ENCODE measurements at regions of chr2 and their contacts with region 1.

Region 1: GRCh38 chr2:42974721-42975717 is 182.6 kb upstream of the HAAO start:
- DNase-seq: peak; percentile 90

Region 2: DNA sequence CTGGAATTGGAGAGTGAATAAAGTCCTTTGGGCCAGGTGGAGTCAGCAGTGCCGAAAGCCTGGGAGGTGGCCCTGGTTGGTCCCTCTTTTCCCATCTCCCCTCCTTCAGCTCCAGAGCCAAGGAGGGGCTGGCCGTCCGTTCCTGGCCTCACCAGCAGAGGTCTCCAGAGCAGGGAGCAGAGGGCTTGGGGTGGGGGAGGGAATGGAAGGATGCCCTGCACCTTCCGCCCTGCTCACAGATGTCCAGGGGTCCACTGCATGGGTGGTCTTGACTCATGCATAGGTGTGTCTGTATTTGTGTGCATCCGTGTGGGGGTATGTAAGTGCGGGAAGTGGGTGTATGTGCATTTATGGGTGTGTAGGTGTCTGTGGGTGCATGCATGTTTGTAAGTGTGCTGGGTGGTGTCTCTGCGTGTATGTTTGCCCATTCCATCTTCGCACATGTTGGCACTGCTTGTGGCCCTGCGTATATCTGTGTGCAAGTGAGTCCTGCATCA is 49.5 kb after region 1 on chr2:
- intact Hi-C with region 1: loop called in 1 of 2 experiments (anchors 5 kb)
- DNase-seq: peak; percentile 89

Region 3: GRCh38 chr2:43105586-43106558 is 130.9 kb after region 1 on chr2:
- intact Hi-C with region 1: loop called in 1 of 2 experiments (anchors 10 kb)
- DNase-seq: peak; percentile 80

Region 4: GRCh38 chr2:43408407-43409160 is 433.6 kb after region 1 on chr2:
- intact Hi-C with region 1: loop called in 1 of 2 experiments (anchors 10 kb)
- DNase-seq: no peak

Region 5: GRCh38 chr2:43484323-43484930 is 509.4 kb after region 1 on chr2:
- intact Hi-C with region 1: loop called in 1 of 2 experiments (anchors 10 kb)
- DNase-seq: no peak

Region 6: GRCh38 chr2:43831543-43832294 is 856.7 kb after region 1 on chr2:
- intact Hi-C with region 1: no loop called
- DNase-seq: peak; percentile 82